Sigmoid colon (tissue), 7 donors: ENCODE measurements at regions of chr11 and their contacts with region 1.

Region 1: GRCh38 chr11:76152086-76152681 is 54.1 kb downstream of the WNT11 start:
- DNase-seq: peak; percentile 93
- H3K4me3 ChIP-seq: peak overlapping the region in 3 of 4 donors; percentile 23 to 41 (median 40)
- H3K27ac ChIP-seq: no peak overlapping the region
- H3K4me1 ChIP-seq: peaks cover 0 to 11% (median 3%) of the 10 kb centered on the region in 4 donors
- H3K27me3 ChIP-seq: no peaks in the 10 kb centered on the region
- CTCF ChIP-seq: peak; percentile 92 to 96 (median 94)
- EP300 ChIP-seq: no peak
- POLR2A ChIP-seq: no peak

Region 2: DNA sequence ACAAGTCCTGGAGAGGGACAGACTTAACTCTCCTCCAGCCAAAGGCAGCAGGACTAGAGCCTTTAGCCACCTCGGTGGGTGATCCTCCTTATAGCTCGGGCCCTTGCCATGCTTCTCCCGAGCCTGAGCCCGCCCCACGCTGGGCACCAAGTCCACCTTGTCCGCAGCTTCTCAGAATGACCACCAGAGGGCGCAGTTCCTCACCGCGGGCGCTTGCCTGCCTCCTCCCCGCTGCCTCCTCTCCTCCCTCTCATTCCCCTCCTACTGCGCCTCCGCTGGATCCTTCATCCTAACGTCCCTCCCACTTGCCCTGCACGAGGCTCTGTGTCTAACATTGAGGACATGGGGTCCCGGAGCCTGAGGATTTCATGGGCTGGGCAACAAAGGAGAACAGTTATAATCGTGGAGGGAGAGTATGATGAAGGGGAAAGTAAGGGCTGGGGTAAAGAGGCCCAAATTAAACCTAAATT is 445.9 kb before region 1 on chr11:
- intact Hi-C with region 1: loop called (anchors 5 kb)
- DNase-seq: peak; percentile 85
- H3K4me3 ChIP-seq: no peak overlapping the region
- H3K27ac ChIP-seq: peak overlapping the region in 2 of 4 donors; percentile 34 to 46
- H3K4me1 ChIP-seq: peaks cover 0 to 14% (median 11%) of the 10 kb centered on the region in 4 donors
- H3K27me3 ChIP-seq: no peaks in the 10 kb centered on the region
- CTCF ChIP-seq: peak; percentile 84 to 97 (median 89)
- EP300 ChIP-seq: no peak
- POLR2A ChIP-seq: no peak

Region 3: DNA sequence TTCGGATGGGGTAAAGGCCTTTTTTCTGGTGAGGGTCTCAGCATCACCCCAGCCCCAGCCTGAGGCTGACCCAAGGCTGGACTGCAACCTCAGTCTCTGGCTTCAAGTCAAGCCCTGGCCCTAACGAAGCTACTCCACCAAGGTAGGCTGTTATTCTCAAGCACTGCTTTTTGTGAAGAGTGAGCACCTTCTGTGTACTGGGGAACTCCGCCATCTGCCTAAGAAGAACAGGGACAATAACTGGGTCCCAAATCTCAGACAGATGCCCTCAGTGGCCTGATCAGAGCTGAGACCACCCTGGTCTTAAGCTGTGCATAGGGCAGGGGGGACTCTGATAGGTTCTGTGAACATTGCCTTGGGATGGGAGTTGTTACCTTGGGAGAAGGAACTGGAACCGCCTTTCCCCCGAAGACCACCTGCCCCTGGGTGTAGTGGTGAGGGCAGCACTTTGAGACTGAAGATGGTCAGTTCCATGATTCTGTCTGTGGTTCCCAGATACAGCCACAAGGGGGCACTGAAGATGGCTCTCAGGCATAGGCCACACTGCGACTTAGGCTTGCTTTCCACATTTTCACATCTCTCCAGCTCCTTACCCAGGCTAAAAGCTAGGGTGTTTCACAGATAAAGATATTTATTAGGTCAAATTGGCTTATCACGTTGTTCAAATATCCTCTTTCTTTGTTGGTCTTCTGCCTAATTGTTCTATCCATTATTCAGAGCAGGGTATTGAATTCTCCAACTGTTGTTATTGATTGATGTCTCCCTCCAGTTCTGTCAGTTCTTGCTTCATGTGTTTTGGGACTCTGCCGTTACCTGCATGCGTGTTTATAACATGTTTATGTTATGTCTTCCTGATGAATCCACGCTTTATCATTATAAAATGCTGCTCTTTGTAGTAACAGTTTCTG is 349.0 kb before region 1 on chr11:
- intact Hi-C with region 1: loop called (anchors 2 kb)
- DNase-seq: peak; percentile 88
- H3K4me3 ChIP-seq: no peak overlapping the region
- H3K27ac ChIP-seq: no peak overlapping the region
- H3K4me1 ChIP-seq: no peaks in the 10 kb centered on the region
- H3K27me3 ChIP-seq: no peaks in the 10 kb centered on the region
- CTCF ChIP-seq: peak; percentile 77 to 95 (median 92)
- EP300 ChIP-seq: no peak
- POLR2A ChIP-seq: no peak

Region 4: DNA sequence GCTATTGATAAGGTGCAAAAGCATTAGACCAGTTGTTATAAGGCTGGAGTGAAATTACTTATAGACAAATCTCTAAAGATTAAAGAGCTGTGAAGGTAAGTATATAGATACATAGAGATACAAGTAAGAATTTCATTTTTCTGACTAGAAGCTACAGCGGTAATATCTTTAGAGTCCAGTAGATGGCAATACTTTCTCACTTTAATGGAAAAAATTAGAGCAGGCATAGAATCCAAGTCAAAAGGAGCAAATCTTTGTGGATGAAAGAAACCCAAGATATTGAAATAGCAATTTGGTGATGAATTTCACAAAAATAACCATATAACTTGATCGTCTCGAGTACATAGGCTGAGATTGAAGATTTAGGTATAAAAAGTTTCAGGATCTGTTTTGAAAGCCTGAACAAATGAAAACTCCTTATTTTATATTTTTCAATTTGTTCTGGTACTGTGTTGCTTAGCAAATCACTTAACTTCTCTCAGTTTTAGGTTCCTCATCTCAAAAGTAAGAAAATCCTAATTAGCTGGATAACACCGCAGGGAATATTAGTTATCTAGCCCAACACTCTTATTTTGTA is 255.3 kb before region 1 on chr11:
- intact Hi-C with region 1: loop called (anchors 1 kb)
- DNase-seq: no peak
- H3K4me3 ChIP-seq: no peak overlapping the region
- H3K27ac ChIP-seq: no peak overlapping the region
- H3K4me1 ChIP-seq: peaks cover 0 to 30% (median 23%) of the 10 kb centered on the region in 4 donors
- H3K27me3 ChIP-seq: no peaks in the 10 kb centered on the region
- CTCF ChIP-seq: peak; percentile 47 to 74 (median 71)
- EP300 ChIP-seq: no peak
- POLR2A ChIP-seq: no peak

Region 5: DNA sequence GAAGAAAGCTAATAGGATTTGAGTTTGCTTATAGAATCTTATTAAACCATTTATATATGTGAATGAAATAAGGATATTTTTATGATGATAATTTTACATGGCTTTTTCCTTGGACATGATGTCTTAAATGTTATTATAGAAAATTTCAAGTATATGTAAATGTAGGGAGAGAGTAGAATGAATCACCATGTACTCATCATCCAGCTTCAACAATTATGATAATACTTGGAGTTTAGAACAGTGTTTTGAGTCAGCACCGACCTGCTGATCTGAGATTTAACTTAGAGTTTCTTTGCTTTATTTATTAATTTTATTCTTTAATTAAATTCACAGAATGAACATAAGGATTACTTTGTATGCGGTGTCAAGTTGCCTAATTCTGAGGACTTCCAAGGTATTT is 143.7 kb before region 1 on chr11:
- intact Hi-C with region 1: no loop called
- DNase-seq: no peak
- H3K4me3 ChIP-seq: no peak overlapping the region
- H3K27ac ChIP-seq: no peak overlapping the region
- H3K4me1 ChIP-seq: peaks cover 0 to 3% (median 0%) of the 10 kb centered on the region in 4 donors
- H3K27me3 ChIP-seq: no peaks in the 10 kb centered on the region
- CTCF ChIP-seq: no peak
- EP300 ChIP-seq: no peak
- POLR2A ChIP-seq: no peak

Region 6: GRCh38 chr11:76318744-76319384 is 166.7 kb after region 1 on chr11:
- intact Hi-C with region 1: loop called (anchors 5 kb)
- DNase-seq: peak; percentile 89
- H3K4me3 ChIP-seq: no peak overlapping the region
- H3K27ac ChIP-seq: no peak overlapping the region
- H3K4me1 ChIP-seq: peaks cover 0 to 7% (median 3%) of the 10 kb centered on the region in 4 donors
- H3K27me3 ChIP-seq: peaks cover 11 to 25% (median 19%) of the 10 kb centered on the region in 3 donors
- CTCF ChIP-seq: peak; percentile 64 to 96 (median 92)
- EP300 ChIP-seq: no peak
- POLR2A ChIP-seq: no peak